ENCODE measurements at regions of chr12 and their contacts with region 1.

Region 1: GRCh38 chr12:101490286-101490920 is 15.3 kb downstream of the SPIC start:
- DNase-seq: peak; percentile 35
- ATAC-seq: peak; percentile 49
- H3K4me3 Mint-ChIP-seq: no peak overlapping the region
- H3K27ac Mint-ChIP-seq: no peak overlapping the region
- H3K4me1 Mint-ChIP-seq: no peaks in the 10 kb centered on the region
- H3K27me3 Mint-ChIP-seq: peaks cover 15% of the 10 kb centered on the region
- CTCF ChIP-seq: peak; percentile 54

Region 2: DNA sequence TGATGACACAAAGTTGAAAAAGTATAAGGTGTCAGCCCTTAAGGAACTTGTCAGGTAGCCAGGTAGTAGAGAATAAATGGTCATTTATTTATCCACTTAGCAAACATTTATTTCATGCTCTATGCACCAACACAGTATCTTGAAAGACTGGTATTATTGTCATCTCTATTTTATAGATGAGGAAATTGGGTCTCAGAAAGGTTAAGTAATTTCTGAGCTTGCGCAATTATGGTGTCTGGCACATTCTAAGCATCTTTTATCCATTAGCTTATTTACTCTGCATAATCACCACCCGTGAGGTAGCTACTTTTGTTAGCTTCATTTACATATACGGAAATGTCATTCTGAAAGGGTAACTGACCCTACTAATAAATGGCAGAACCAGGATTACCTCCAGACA is 213.0 kb before region 1 on chr12:
- CTCF ChIA-PET with region 1: no interaction called
- POLR2A ChIA-PET with region 1: no interaction called
- intact Hi-C with region 1: no loop called
- DNase-seq: no peak
- ATAC-seq: no peak
- H3K4me3 Mint-ChIP-seq: no peak overlapping the region
- H3K27ac Mint-ChIP-seq: no peak overlapping the region
- H3K4me1 Mint-ChIP-seq: peaks cover 11% of the 10 kb centered on the region
- H3K27me3 Mint-ChIP-seq: peaks cover 12% of the 10 kb centered on the region
- CTCF ChIP-seq: no peak

Region 3: GRCh38 chr12:101475829-101476228 is 14.6 kb before region 1 on chr12:
- CTCF ChIA-PET with region 1: no interaction called
- POLR2A ChIA-PET with region 1: no interaction called
- intact Hi-C with region 1: no loop called
- DNase-seq: no peak
- ATAC-seq: no peak
- H3K4me3 Mint-ChIP-seq: no peak overlapping the region
- H3K27ac Mint-ChIP-seq: no peak overlapping the region
- H3K4me1 Mint-ChIP-seq: no peaks in the 10 kb centered on the region
- H3K27me3 Mint-ChIP-seq: peaks cover 2% of the 10 kb centered on the region
- CTCF ChIP-seq: no peak

Region 4: DNA sequence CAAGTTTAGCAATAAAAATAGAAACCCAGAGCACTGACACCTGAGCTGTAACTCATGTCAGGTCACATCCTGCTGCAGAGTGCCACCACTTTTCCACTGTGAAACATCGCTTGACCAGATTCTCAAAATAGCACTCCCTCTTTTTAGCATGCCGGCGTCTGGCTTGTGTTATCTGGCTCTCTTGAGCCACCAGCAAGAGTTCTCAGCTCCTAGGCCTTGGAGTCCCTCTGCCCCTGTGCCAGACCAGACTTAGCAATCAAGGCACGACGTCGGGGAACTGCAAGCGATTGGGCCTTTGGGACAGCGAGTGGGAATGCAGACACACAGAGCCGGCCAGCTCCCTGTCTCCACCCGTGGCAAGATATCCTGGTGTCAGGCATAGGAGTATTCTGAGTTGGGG is 37.3 kb after region 1 on chr12:
- CTCF ChIA-PET with region 1: no interaction called
- POLR2A ChIA-PET with region 1: no interaction called
- intact Hi-C with region 1: no loop called
- DNase-seq: no peak
- ATAC-seq: no peak
- H3K4me3 Mint-ChIP-seq: no peak overlapping the region
- H3K27ac Mint-ChIP-seq: no peak overlapping the region
- H3K4me1 Mint-ChIP-seq: no peaks in the 10 kb centered on the region
- H3K27me3 Mint-ChIP-seq: peaks cover 13% of the 10 kb centered on the region
- CTCF ChIP-seq: no peak

Region 5: GRCh38 chr12:101743724-101744472 is 253.5 kb after region 1 on chr12:
- CTCF ChIA-PET with region 1: no interaction called
- POLR2A ChIA-PET with region 1: no interaction called
- intact Hi-C with region 1: loop called (anchors 10 kb)
- DNase-seq: peak; percentile 21
- ATAC-seq: peak; percentile 61
- H3K4me3 Mint-ChIP-seq: no peak overlapping the region
- H3K27ac Mint-ChIP-seq: peak overlapping the region; percentile 53
- H3K4me1 Mint-ChIP-seq: peaks cover 10% of the 10 kb centered on the region
- H3K27me3 Mint-ChIP-seq: no peaks in the 10 kb centered on the region
- CTCF ChIP-seq: no peak

Region 6: GRCh38 chr12:101909646-101910045 is 419.2 kb after region 1 on chr12:
- CTCF ChIA-PET with region 1: no interaction called
- POLR2A ChIA-PET with region 1: no interaction called
- intact Hi-C with region 1: no loop called
- DNase-seq: no peak
- ATAC-seq: no peak
- H3K4me3 Mint-ChIP-seq: no peak overlapping the region
- H3K27ac Mint-ChIP-seq: no peak overlapping the region
- H3K4me1 Mint-ChIP-seq: no peaks in the 10 kb centered on the region
- H3K27me3 Mint-ChIP-seq: no peaks in the 10 kb centered on the region
- CTCF ChIP-seq: no peak

Measured in activated CD8-positive, alpha-beta T cell treated with anti-CD3 and anti-CD28 coated beads for 36 hours (primary cell).